Panc1 (cell line): ENCODE measurements at regions of chr19 and their contacts with region 1.

Region 1: DNA sequence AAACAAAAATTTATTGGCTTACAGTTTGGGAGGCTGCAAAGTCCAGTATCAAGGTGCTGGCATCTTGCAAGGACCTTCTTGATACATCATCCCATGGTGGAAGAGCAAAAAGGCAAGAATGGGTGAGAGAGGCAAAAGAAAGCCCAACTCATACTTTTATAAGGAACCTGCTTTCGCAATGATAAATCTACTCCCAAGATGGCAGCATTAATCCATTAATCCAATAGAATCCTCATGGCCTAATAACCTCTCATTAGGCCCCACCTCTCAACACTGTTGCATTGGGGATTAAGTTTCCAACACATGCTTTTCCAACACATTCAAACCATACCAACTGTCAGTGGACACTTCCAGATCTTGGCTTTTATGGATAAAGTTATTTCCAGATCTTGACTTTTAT is 48.7 kb upstream of the ZNF507 start:
- DNase-seq: no peak
- ATAC-seq: no peak
- H3K4me3 ChIP-seq: no peak overlapping the region
- H3K27ac ChIP-seq: no peak overlapping the region
- H3K4me1 ChIP-seq: no peaks in the 10 kb centered on the region
- H3K27me3 ChIP-seq: no peaks in the 10 kb centered on the region
- CTCF ChIP-seq: peak; percentile 28

Region 2: DNA sequence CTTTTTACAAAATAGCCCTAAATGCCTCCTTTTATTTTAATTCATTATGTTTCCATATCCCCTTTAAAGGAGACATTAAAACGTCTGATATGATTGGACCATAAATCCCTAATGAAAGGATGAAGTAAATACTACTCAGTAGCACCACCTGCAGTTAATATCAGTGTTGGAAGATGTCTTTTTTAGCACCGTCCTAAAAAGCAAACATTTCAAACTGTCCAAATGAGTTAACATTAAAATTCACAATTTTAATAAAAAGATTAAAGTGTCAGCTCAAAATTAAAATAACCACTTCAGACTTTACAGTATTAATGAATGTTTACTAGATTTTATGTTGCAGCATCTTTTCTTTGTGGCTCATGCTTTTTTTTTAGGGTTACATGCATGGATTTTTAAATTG is 61.0 kb after region 1 on chr19:
- CTCF ChIA-PET with region 1: no interaction called
- POLR2A ChIA-PET with region 1: no interaction called
- in situ Hi-C with region 1: no loop called
- intact Hi-C with region 1: no loop called
- DNase-seq: no peak
- ATAC-seq: no peak
- H3K4me3 ChIP-seq: no peak overlapping the region
- H3K27ac ChIP-seq: 0 out of 2 replicates have a peak overlapping the region, but pooled peaks have one; percentile 9
- H3K4me1 ChIP-seq: no peaks in the 10 kb centered on the region
- H3K27me3 ChIP-seq: no peaks in the 10 kb centered on the region
- CTCF ChIP-seq: peak; percentile 46; the same call in 1 of the 2 replicates

Region 3: DNA sequence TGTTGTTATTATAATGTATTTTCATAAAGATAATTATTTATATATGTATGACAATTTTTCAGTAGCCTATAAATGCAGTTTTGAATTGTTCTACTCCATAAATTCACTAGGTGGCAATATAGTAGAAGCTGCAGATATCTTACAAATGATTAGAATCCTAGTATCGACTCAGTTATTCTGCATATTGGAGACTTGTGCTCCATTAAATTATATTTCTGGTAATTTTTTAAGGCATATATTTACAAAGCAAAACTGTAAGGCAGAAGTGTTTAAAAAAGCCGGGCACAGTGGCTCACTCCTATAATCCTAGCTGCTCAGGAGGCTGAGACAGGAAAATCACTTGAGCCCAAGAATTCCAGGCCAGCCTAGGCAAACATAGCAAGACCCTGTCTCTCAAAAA is 167.6 kb after region 1 on chr19:
- CTCF ChIA-PET with region 1: no interaction called
- POLR2A ChIA-PET with region 1: interaction called, 15 read pairs
- in situ Hi-C with region 1: no loop called
- intact Hi-C with region 1: no loop called
- DNase-seq: peak; percentile 27
- ATAC-seq: peak; percentile 63; the same call in 1 of the 2 replicates
- H3K4me3 ChIP-seq: no peak overlapping the region
- H3K27ac ChIP-seq: no peak overlapping the region
- H3K4me1 ChIP-seq: no peaks in the 10 kb centered on the region
- H3K27me3 ChIP-seq: no peaks in the 10 kb centered on the region
- CTCF ChIP-seq: peak; percentile 69